ENCODE measurements at regions of chr5 and their contacts with region 1.

Region 1: DNA sequence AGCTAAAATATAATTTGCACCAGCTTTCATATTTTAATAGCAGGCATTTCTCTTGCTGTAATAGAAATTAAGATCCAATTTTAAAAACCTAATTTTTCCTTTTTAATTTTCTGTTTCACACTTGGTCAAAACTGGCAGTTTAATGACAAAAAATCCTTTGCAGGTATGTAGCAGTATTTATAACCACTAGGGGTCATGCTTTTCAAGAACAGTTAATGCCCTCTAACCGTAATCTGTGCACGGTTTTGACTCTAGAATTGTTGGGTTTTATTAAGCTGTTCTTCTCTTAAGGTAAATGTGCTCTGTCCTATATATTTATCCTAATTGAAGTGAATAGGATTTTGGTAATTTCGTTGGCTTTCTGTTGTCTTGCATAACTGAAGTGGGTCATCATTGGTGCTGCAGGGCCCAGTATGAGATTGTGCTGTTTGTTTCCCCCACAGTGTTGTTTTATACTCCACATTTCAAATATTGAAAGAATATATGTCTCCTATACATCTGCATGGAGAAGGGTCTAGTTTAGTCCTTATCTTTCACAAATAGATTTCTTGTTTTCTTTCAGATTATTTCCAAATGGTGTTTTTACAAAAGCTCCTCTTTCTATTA is 107.4 kb downstream of the SCAMP1 start:
- DNase-seq: peak; percentile 70
- H3K4me3 ChIP-seq: no peak overlapping the region
- H3K27ac ChIP-seq: no peak overlapping the region
- H3K4me1 ChIP-seq: no peaks in the 10 kb centered on the region
- CTCF ChIP-seq: peak; percentile 96

Region 2: GRCh38 chr5:77400645-77401044 is 1067.2 kb before region 1 on chr5:
- CTCF ChIA-PET with region 1: no interaction called
- POLR2A ChIA-PET with region 1: no interaction called
- intact Hi-C with region 1: no loop called
- DNase-seq: no peak
- H3K4me3 ChIP-seq: no peak overlapping the region
- H3K27ac ChIP-seq: no peak overlapping the region
- H3K4me1 ChIP-seq: no peaks in the 10 kb centered on the region
- CTCF ChIP-seq: no peak

Region 3: GRCh38 chr5:78886341-78887230 is 418.7 kb after region 1 on chr5:
- CTCF ChIA-PET with region 1: no interaction called
- POLR2A ChIA-PET with region 1: no interaction called
- intact Hi-C with region 1: loop called (anchors 10 kb)
- DNase-seq: peak; percentile 44
- H3K4me3 ChIP-seq: no peak overlapping the region
- H3K27ac ChIP-seq: peak overlapping the region; percentile 39
- H3K4me1 ChIP-seq: peaks cover 28% of the 10 kb centered on the region
- CTCF ChIP-seq: peak; percentile 97

Region 4: DNA sequence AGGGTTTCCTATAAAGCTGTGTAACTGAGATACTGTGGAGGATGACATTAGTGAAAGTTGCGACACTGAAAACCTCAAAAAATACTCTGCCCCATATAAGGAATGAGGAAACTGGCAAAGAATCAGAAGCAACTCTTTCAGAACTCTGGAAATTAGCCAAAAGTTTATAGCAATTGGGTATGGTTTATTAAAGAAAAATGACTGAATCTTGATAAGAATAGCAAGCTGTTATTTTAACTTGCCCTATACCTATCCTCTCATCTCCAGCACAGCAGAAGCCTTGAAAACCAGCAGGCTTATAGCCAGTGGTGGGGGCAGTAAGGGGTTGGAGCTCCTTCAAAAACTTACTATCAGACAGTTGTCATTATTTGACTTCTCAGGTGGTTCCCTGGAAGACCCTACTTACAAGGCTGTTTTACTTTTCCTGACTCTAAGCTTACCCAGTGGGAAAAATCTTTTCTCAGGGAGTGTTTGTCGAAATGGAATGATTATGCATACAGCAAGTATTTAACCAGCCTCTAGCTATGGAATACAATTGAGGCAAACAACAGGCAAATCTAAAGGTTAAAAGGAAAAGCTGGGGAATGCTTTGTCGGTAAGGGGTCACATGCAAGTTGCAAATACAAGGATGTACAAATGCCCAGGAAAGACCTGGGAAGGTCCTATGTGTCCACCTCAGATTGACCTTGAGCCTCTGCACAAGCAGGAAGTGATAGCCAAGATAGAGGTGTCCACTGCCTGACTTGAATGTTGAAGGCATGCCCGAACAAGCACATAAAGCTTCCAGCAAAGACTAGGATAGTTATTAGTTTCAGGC is 1999.0 kb after region 1 on chr5:
- CTCF ChIA-PET with region 1: no interaction called
- POLR2A ChIA-PET with region 1: no interaction called
- intact Hi-C with region 1: no loop called
- DNase-seq: no peak
- H3K4me3 ChIP-seq: no peak overlapping the region
- H3K27ac ChIP-seq: no peak overlapping the region
- H3K4me1 ChIP-seq: no peaks in the 10 kb centered on the region
- CTCF ChIP-seq: no peak

Measured in OCI-LY7 (cell line).